PC-9 (cell line): ENCODE measurements at regions of chr2 and their contacts with region 1.

Region 1: GRCh38 chr2:63861220-63861822 is 19.6 kb downstream of the UGP2 start:
- DNase-seq: no peak
- H3K4me3 ChIP-seq: no peak overlapping the region
- H3K27ac ChIP-seq: no peak overlapping the region
- H3K4me1 ChIP-seq: peaks cover 18% of the 10 kb centered on the region
- H3K27me3 ChIP-seq: no peaks in the 10 kb centered on the region
- CTCF ChIP-seq: peak; percentile 70

Region 2: DNA sequence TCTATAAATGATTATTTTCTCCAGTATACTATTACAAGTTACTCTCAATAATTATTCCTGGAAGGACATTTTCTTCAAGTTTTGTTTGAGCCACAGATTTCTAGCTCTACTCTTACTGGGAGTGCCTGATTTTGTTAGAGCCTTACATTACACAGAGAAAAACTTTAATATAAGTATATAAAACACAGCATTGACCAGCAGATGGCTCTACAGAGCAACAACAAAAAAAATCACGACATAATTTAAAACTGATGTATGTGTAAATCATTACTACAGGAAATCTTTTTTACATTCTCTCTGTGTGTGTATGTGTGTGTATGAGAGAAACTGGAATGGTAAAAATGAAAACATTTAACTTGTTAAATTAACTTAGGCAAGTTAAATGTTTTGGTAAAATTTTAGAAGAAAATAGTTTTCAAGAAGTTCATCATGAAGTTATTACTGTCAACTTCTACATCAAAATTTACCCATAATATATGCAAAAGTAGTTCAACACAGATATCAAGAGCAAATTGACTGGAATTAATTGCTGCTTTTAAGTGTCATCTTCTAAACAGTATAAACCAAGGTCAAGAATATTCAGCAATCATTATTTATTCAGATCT is 169.2 kb before region 1 on chr2:
- CTCF ChIA-PET with region 1: interaction called, 6 read pairs
- POLR2A ChIA-PET with region 1: interaction called, 3 read pairs
- intact Hi-C with region 1: loop called (anchors 1 kb)
- DNase-seq: peak; percentile 8 to 41
- H3K4me3 ChIP-seq: no peak overlapping the region
- H3K27ac ChIP-seq: no peak overlapping the region
- H3K4me1 ChIP-seq: peaks cover 9% of the 10 kb centered on the region; the same call in 1 of the 2 replicates
- H3K27me3 ChIP-seq: no peaks in the 10 kb centered on the region
- CTCF ChIP-seq: peak; percentile 85

Region 3: GRCh38 chr2:63698825-63699548 is 162.3 kb before region 1 on chr2:
- CTCF ChIA-PET with region 1: interaction called, 18 read pairs
- POLR2A ChIA-PET with region 1: interaction called, 7 read pairs
- intact Hi-C with region 1: no loop called
- DNase-seq: peak; percentile 52 to 75
- H3K4me3 ChIP-seq: no peak overlapping the region
- H3K27ac ChIP-seq: peak overlapping the region; percentile 54
- H3K4me1 ChIP-seq: peaks cover 25% of the 10 kb centered on the region
- H3K27me3 ChIP-seq: no peaks in the 10 kb centered on the region
- CTCF ChIP-seq: peak; percentile 63

Region 4: GRCh38 chr2:63741874-63742583 is 119.3 kb before region 1 on chr2:
- CTCF ChIA-PET with region 1: no interaction called
- POLR2A ChIA-PET with region 1: no interaction called
- intact Hi-C with region 1: loop called (anchors 5 kb)
- DNase-seq: peak in 1 of 2 experiments; percentile 69
- H3K4me3 ChIP-seq: no peak overlapping the region
- H3K27ac ChIP-seq: no peak overlapping the region
- H3K4me1 ChIP-seq: no peaks in the 10 kb centered on the region
- H3K27me3 ChIP-seq: no peaks in the 10 kb centered on the region
- CTCF ChIP-seq: no peak

Region 5: GRCh38 chr2:63849381-63850203 is 11.7 kb before region 1 on chr2:
- CTCF ChIA-PET with region 1: no interaction called
- POLR2A ChIA-PET with region 1: no interaction called
- intact Hi-C with region 1: loop called (anchors 2 kb)
- DNase-seq: peak in 1 of 2 experiments; percentile 34
- H3K4me3 ChIP-seq: no peak overlapping the region
- H3K27ac ChIP-seq: peak overlapping the region; percentile 13; the same call in 1 of the 2 replicates
- H3K4me1 ChIP-seq: no peaks in the 10 kb centered on the region
- H3K27me3 ChIP-seq: no peaks in the 10 kb centered on the region
- CTCF ChIP-seq: no peak